Prostate gland (tissue), 2 donors: ENCODE measurements at regions of chr10 and their contacts with region 1.

Region 1: GRCh38 chr10:29304264-29305030 is 15.6 kb downstream of the LYZL1 start:
- DNase-seq: peak; percentile 64
- H3K4me3 ChIP-seq: no peak overlapping the region
- H3K27ac ChIP-seq: no peak overlapping the region
- H3K4me1 ChIP-seq: no peaks in the 10 kb centered on the region
- H3K27me3 ChIP-seq: no peaks in the 10 kb centered on the region
- CTCF ChIP-seq: peak; percentile 49 to 87 (median 78)
- POLR2A ChIP-seq: no peak

Region 2: GRCh38 chr10:28432210-28432676 is 872.2 kb before region 1 on chr10:
- intact Hi-C with region 1: loop called (anchors 10 kb)
- DNase-seq: peak; percentile 47
- H3K4me3 ChIP-seq: no peak overlapping the region
- H3K27ac ChIP-seq: no peak overlapping the region
- H3K4me1 ChIP-seq: no peaks in the 10 kb centered on the region
- H3K27me3 ChIP-seq: no peaks in the 10 kb centered on the region
- CTCF ChIP-seq: peak in 3 of 4 experiments; percentile 58 to 76 (median 72)
- POLR2A ChIP-seq: no peak

Region 3: DNA sequence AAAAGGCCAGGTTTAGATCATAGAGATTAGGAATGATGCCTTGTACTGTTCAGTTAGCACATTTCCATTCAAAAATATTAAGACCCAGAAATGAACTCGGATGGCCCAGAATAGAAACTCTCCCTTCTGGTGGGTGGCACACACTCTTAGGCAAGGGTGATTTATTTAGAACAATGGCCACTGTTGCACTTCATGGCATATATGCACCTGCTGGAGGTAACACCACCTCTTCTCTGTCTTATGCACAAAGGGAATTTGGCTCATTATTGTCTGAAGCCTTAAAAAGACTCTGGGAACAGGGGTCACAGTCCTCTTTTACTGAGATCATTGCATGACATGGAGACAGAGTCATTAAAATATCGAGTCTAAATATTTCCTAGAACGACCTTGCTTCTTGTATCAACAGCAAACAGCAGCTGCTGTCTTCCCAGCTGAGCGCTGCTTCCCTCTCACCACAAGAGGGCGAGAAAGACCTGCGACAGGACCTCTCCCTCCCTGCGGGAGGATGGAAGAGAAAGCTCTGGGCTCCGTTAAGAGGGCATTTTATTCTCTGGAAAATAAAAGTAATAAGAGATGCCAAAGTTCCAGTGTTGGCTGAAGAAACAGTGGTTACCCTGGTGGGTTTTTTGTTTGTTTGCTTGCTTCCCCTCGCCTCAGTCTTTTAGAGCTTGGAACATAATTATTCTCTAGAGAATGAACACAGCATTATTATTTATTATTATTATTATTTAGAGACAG is 640.7 kb before region 1 on chr10:
- intact Hi-C with region 1: loop called (anchors 2 kb)
- DNase-seq: peak; percentile 64
- H3K4me3 ChIP-seq: no peak overlapping the region
- H3K27ac ChIP-seq: no peak overlapping the region
- H3K4me1 ChIP-seq: no peaks in the 10 kb centered on the region
- H3K27me3 ChIP-seq: peaks cover 2% of the 10 kb centered on the region
- CTCF ChIP-seq: peak; percentile 71 to 91 (median 88)
- POLR2A ChIP-seq: no peak

Region 4: GRCh38 chr10:28676968-28677887 is 627.2 kb before region 1 on chr10 and contains the start of gene BAMBI:
- intact Hi-C with region 1: loop called (anchors 5 kb)
- DNase-seq: peak; percentile 93
- H3K4me3 ChIP-seq: peak within 1 kb of the TSS; percentile 57 to 81
- H3K27ac ChIP-seq: peak within 1 kb of the TSS; percentile 33 to 50
- H3K4me1 ChIP-seq: no peaks in the 10 kb centered on the region
- H3K27me3 ChIP-seq: no peaks in the 10 kb centered on the region
- CTCF ChIP-seq: peak; percentile 56 to 90 (median 65)
- POLR2A ChIP-seq: peak; percentile 97
- total RNA-seq, gene BAMBI: 3.1 to 58.9 TPM

Region 5: GRCh38 chr10:29120237-29120636 is 184.2 kb before region 1 on chr10:
- intact Hi-C with region 1: loop called (anchors 10 kb)
- DNase-seq: no peak
- H3K4me3 ChIP-seq: no peak overlapping the region
- H3K27ac ChIP-seq: no peak overlapping the region
- H3K4me1 ChIP-seq: no peaks in the 10 kb centered on the region
- H3K27me3 ChIP-seq: no peaks in the 10 kb centered on the region
- CTCF ChIP-seq: no peak
- POLR2A ChIP-seq: no peak